ENCODE measurements at regions of chr10 and their contacts with region 1.

Region 1: DNA sequence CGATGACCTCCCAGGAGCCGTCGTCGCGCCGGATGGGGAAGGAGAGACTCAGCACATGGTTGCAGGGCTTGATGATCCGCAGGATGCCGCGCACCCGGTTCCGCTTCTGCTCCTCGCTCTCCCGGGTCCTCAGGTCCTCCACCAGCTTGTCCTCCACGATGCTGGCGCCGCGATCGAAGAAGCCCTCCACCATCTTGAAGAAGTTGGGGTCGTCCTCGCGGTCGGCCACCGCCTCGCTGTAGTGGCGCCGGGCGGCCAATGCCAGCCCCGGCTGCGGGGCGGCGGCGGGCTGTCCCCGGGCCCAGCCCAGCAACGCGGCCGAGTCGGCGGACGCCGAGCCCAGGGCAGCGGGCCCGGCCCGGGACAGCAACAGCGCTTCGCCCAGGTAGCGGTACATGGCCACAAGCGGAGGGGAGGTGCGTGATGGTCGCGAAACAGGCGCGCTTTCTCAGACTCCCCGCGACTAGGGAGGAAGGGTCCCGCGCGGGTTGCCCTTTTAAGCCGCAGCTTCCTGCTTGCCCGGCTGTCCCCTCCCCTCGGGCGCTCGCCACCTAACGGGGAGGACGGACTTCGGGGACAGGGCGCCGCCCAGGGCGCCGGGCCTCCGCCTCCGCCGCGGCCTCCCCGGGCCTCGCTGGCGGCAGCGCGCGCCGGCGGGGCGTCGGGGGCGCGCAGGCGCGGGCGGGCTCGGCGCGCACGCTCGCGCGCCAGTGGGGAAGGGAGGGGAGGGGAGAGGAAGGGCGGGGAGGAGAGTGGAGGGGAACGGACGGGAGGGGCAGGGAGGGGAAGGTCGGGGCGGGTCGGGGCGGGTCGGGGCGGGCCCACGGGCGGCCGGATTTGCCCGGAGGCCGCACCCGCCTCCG is at the starts of genes GLUD1 and SHLD2:
- DNase-seq: peak; percentile 83 to 88
- H3K4me3 ChIP-seq: peak within 1 kb of the TSS; percentile 77 to 93
- H3K27ac ChIP-seq: peak within 1 kb of the TSS; percentile 96
- H3K4me1 ChIP-seq: peaks cover 0 to 7% of the 10 kb centered on the region in 2 donors
- H3K27me3 ChIP-seq: no peaks in the 10 kb centered on the region
- CTCF ChIP-seq: peak in 1 of 4 experiments; percentile 10
- POLR2A ChIP-seq: peak; percentile 61 to 82
- total RNA-seq, gene GLUD1: 115 to 189 (median 125) TPM
- total RNA-seq, gene SHLD2: 17.1 to 61.6 (median 30.2) TPM

Region 2: GRCh38 chr10:86849181-86849894 is 245.3 kb before region 1 on chr10:
- intact Hi-C with region 1: no loop called
- DNase-seq: no peak
- H3K4me3 ChIP-seq: no peak overlapping the region
- H3K27ac ChIP-seq: no peak overlapping the region
- H3K4me1 ChIP-seq: no peaks in the 10 kb centered on the region
- H3K27me3 ChIP-seq: no peaks in the 10 kb centered on the region
- CTCF ChIP-seq: no peak
- POLR2A ChIP-seq: no peak

Region 3: GRCh38 chr10:86960003-86960862 is 134.4 kb before region 1 on chr10:
- intact Hi-C with region 1: loop called (anchors 10 kb)
- DNase-seq: peak; percentile 47 to 54
- H3K4me3 ChIP-seq: no peak overlapping the region
- H3K27ac ChIP-seq: peak overlapping the region; percentile 76 to 82
- H3K4me1 ChIP-seq: peaks cover 0 to 10% of the 10 kb centered on the region in 2 donors
- H3K27me3 ChIP-seq: no peaks in the 10 kb centered on the region
- CTCF ChIP-seq: peak; percentile 57 to 92 (median 79)
- POLR2A ChIP-seq: no peak

Region 4: GRCh38 chr10:87038786-87039185 is 55.8 kb before region 1 on chr10:
- intact Hi-C with region 1: no loop called
- DNase-seq: no peak
- H3K4me3 ChIP-seq: no peak overlapping the region
- H3K27ac ChIP-seq: no peak overlapping the region
- H3K4me1 ChIP-seq: no peaks in the 10 kb centered on the region
- H3K27me3 ChIP-seq: no peaks in the 10 kb centered on the region
- CTCF ChIP-seq: no peak
- POLR2A ChIP-seq: no peak